T-cell (primary cell): ENCODE measurements at regions of chr5 and their contacts with region 1.

Region 1: DNA sequence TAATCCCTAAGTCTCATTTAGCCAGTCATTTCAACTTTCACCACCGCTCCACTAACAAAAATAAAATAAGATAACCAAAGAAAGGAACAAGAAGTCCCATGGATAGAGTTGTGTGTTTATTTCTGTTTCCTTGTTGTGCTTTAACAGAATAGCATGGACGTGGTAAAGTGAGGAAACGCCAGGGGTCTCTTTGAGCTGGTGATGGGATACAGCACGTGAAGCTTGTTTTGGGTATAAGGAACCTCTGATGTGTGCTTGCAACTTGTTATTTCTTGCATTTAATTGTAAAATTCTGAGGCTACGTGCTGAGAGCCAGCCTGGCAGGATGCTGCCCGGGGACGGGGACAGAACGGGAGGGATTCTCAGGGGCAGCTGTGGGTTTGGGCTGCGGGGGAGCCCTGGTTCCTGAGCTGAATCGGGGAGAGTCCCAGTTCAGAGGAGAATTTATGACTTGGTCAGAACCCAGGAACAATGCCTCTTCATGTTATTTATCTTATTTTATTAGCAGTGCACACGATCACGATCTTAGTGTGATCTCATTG is 63.4 kb downstream of the ANKRD33B start:
- DNase-seq: no peak
- ATAC-seq: peak; percentile 16 to 32 (median 20)
- H3K4me3 ChIP-seq: peak overlapping the region; percentile 45 to 74
- H3K4me3 Mint-ChIP-seq: peak overlapping the region; percentile 66 to 89 (median 79)
- H3K27ac ChIP-seq: no peak overlapping the region
- H3K27ac Mint-ChIP-seq: peak overlapping the region; percentile 17 to 21
- H3K4me1 ChIP-seq: peaks cover 2 to 21% of the 10 kb centered on the region in 2 experiments
- H3K4me1 Mint-ChIP-seq: peaks cover 14 to 30% (median 14%) of the 10 kb centered on the region in 3 donors
- H3K27me3 ChIP-seq: peaks cover 0 to 14% of the 10 kb centered on the region in 2 experiments
- H3K27me3 Mint-ChIP-seq: peaks cover 0 to 5% of the 10 kb centered on the region in 2 donors

Region 2: DNA sequence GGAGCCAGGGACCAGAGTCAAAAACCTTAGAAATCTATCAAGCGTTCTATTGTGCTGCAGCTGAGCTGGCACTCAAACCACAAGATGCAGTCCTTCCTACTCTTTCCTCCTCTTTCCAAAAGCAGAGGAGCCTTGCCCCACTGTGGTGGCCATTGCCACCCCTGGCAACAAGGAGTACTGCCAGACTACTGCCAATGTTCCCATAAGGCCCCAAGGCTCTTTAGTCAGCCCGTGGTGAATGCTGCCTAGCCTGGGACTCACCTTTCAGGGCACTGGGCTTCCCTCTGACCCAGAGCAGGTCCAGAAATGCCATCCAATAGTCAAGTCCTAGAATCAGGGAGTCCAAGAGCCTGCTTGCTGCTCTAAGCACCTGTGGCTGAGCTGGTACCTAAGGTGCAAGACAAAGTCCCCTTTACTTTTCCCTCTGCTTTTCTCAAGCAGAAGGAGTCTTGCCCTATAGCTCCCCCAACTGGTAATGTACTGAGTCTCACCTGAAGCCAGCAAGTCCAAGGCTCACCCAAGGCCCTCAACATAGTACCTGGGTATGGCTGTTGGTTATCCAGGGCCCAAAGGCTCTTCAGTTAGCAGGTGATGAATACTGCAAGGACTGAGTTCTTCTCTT is 596.9 kb before region 1 on chr5:
- CTCF ChIA-PET with region 1: no interaction called
- POLR2A ChIA-PET with region 1: no interaction called
- DNase-seq: no peak
- ATAC-seq: no peak
- H3K4me3 ChIP-seq: no peak overlapping the region
- H3K4me3 Mint-ChIP-seq: no peak overlapping the region
- H3K27ac ChIP-seq: no peak overlapping the region
- H3K27ac Mint-ChIP-seq: no peak overlapping the region
- H3K4me1 ChIP-seq: no peaks in the 10 kb centered on the region
- H3K4me1 Mint-ChIP-seq: no peaks in the 10 kb centered on the region
- H3K27me3 ChIP-seq: no peaks in the 10 kb centered on the region
- H3K27me3 Mint-ChIP-seq: peaks cover 0 to 2% of the 10 kb centered on the region in 2 donors

Region 3: GRCh38 chr5:10257870-10258269 is 369.4 kb before region 1 on chr5:
- CTCF ChIA-PET with region 1: no interaction called
- POLR2A ChIA-PET with region 1: no interaction called
- DNase-seq: no peak
- ATAC-seq: no peak
- H3K4me3 ChIP-seq: no peak overlapping the region
- H3K4me3 Mint-ChIP-seq: no peak overlapping the region
- H3K27ac ChIP-seq: no peak overlapping the region
- H3K27ac Mint-ChIP-seq: no peak overlapping the region
- H3K4me1 ChIP-seq: peaks cover 0 to 8% of the 10 kb centered on the region in 2 experiments
- H3K4me1 Mint-ChIP-seq: peaks cover 19 to 26% (median 21%) of the 10 kb centered on the region in 3 donors
- H3K27me3 ChIP-seq: no peaks in the 10 kb centered on the region
- H3K27me3 Mint-ChIP-seq: no peaks in the 10 kb centered on the region

Region 4: GRCh38 chr5:10452768-10453331 is 174.4 kb before region 1 on chr5:
- CTCF ChIA-PET with region 1: interaction called, 26 to 52 read pairs
- POLR2A ChIA-PET with region 1: interaction called in 1 of 2 experiments, 3 read pairs
- DNase-seq: peak in 8 of 35 experiments; percentile 6 to 77 (median 15)
- ATAC-seq: peak; percentile 54 to 82 (median 73)
- H3K4me3 ChIP-seq: no peak overlapping the region
- H3K4me3 Mint-ChIP-seq: no peak overlapping the region
- H3K27ac ChIP-seq: no peak overlapping the region
- H3K27ac Mint-ChIP-seq: no peak overlapping the region
- H3K4me1 ChIP-seq: peaks cover 0 to 6% of the 10 kb centered on the region in 2 experiments
- H3K4me1 Mint-ChIP-seq: peaks cover 14 to 22% (median 19%) of the 10 kb centered on the region in 3 donors
- H3K27me3 ChIP-seq: peaks cover 0 to 3% of the 10 kb centered on the region in 2 experiments
- H3K27me3 Mint-ChIP-seq: no peaks in the 10 kb centered on the region